ENCODE measurements at regions of chr1 and their contacts with region 1.

Region 1: DNA sequence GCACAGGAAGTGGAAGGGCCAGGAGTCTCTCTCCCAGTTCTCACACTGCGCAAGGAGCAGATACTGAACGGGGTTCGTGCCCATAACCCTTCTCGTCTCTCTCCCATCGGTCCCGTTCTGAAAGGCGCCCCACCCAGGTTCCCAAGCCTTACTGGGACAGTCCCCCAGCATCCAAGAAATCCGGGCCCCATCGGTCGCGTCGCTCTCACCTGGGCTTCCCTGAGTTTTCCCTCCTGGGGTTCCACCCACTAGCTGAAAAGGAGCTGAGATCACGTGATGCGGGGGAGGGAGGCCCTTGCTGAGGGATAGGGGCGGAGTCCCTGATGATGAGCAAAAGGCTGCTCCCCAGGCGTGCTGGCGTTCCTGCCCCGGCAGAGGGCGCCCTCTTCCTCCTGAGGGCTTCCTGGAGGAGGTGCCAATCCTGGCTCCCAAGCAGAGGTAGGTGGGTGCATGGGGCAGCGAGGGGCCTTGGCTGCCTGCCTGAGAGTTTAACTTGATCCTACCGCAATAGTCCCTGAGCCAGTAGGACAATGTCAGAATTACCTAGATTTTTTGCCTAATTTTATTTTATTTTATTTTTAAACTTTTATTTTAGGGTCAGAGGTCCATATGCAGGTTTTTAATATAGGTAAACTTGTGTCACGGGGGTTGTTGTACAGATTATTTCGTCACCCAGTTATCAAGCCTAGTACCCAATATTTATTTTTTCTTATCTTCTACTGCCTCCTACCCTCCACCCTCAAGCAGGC is at the start of gene SPOCD1:
- DNase-seq: peak; percentile 34 to 67
- ATAC-seq: peak; percentile 52 to 64
- H3K4me3 ChIP-seq: no peak within 1 kb of the TSS
- H3K27ac ChIP-seq: no peak within 1 kb of the TSS
- H3K4me1 ChIP-seq: no peaks in the 10 kb centered on the region
- H3K27me3 ChIP-seq: no peaks in the 10 kb centered on the region
- CTCF ChIP-seq: peak; percentile 47 to 73 (median 63)
- POLR2A ChIP-seq: no peak
- total RNA-seq, gene SPOCD1: not detected

Region 2: GRCh38 chr1:31904339-31905092 is 88.6 kb after region 1 on chr1:
- in situ Hi-C with region 1: no loop called
- intact Hi-C with region 1: loop called (anchors 10 kb)
- DNase-seq: peak in 1 of 2 donors; percentile 63
- ATAC-seq: peak; percentile 46 to 66
- H3K4me3 ChIP-seq: no peak overlapping the region
- H3K27ac ChIP-seq: peak overlapping the region in 2 of 4 donors; percentile 31 to 32
- H3K4me1 ChIP-seq: no peaks in the 10 kb centered on the region
- H3K27me3 ChIP-seq: no peaks in the 10 kb centered on the region
- CTCF ChIP-seq: no peak
- POLR2A ChIP-seq: no peak

Measured in gastrocnemius medialis (tissue), 4 donors.